ENCODE measurements at regions of chr16 and their contacts with region 1.

Region 1: GRCh38 chr16:77971306-77972271 is 50.8 kb upstream of the CLEC3A start:
- DNase-seq: peak; percentile 71 to 85 (median 81)
- ATAC-seq: peak in 3 of 4 donors; percentile 87 to 93 (median 88)
- H3K4me3 ChIP-seq: no peak overlapping the region
- H3K27ac ChIP-seq: peak overlapping the region in 1 of 12 donors; percentile 29
- H3K4me1 ChIP-seq: peaks cover 0 to 4% (median 0%) of the 10 kb centered on the region in 12 donors
- H3K27me3 ChIP-seq: peaks cover 0 to 5% (median 0%) of the 10 kb centered on the region in 9 donors
- CTCF ChIP-seq: peak; percentile 58 to 83 (median 78)
- POLR2A ChIP-seq: no peak

Region 2: DNA sequence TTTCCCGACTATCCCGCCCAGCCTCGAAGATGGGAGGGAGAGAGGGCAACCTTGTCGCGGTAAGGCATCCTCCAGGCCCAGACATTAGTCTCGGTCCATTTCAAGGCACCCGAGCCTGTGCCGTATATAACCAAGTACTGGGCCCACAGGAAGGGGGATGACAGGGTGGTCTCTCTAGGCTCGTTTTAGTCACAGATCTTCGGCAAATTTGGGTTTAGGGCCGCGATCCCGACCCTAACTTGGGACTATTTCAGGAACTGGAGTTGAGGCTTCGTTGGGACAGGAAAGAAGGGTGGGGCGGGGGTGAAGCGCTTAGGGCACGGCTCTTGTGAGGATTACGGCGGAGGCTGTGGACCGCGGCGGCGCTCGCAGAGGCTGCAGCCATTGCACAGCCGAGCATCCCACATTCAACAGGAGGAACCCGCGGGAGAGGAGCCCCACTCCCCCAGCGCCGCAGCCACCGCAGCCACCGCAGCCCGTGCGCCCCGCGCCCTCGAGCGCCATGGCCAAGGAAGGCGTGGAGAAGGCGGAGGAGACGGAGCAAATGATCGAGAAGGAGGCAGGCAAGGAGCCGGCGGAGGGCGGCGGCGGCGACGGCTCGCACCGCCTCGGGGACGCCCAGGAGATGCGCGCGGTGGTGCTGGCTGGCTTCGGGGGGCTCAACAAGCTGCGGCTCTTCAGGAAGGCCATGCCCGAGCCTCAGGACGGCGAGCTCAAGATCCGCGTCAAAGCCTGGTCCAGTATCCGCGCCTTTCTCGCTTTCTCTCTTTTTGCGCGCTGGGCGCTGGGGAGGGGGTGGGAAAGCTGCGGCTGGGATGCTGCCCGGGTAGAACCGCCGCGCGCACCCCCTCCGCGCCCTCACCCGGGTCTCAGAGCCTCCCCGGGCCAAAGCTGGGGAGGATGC is 183.2 kb before region 1 on chr16 and contains the start of gene VAT1L:
- intact Hi-C with region 1: loop called in 3 of 10 experiments (anchors 5 to 10 kb)
- DNase-seq: peak in 3 of 5 donors; percentile 32 to 34 (median 33)
- ATAC-seq: peak; percentile 52 to 94 (median 88)
- H3K4me3 ChIP-seq: peak within 1 kb of the TSS; percentile 47 to 78 (median 62)
- H3K27ac ChIP-seq: peak within 1 kb of the TSS in 2 of 12 donors; percentile 9 to 22
- H3K4me1 ChIP-seq: peaks cover 0 to 25% (median 7%) of the 10 kb centered on the region in 12 donors
- H3K27me3 ChIP-seq: peaks cover 6 to 66% (median 13%) of the 10 kb centered on the region in 9 donors
- CTCF ChIP-seq: no peak
- POLR2A ChIP-seq: no peak
- total RNA-seq, gene VAT1L: 2.9 to 57.5 (median 14.3) TPM

Region 3: DNA sequence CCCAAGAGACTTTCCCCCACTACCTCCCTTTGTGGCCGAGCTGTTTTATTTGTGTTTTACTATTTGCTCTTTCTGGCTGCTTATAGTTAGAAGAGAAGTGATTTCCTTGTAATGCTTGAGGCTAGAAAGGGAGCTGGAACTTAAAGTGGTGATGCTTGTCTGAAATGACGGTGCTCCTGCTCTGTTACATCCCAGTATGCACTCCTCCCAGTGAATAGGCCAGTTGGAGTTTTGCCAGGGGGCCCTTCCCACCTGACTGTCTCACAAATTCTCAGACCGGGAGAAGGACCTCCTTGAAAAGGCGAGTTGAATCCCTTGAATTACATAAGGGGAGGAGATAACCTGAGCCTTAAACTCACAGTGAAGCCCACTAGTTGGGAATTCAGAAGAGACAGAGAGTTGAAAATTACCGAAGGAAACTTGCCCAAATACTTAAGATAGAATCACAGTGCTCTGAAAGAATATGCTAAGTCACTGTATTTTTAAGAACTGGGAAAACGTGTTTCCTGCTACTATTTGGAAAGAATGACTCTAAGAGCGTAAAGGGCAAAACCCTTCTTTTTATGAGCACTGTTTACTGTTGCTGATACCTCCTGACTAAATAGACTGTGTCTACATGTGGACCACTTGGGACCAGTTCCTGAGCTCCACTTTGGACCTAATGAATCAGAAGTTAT is 34.0 kb before region 1 on chr16:
- intact Hi-C with region 1: no loop called
- DNase-seq: no peak
- ATAC-seq: peak in 1 of 4 donors; percentile 20
- H3K4me3 ChIP-seq: no peak overlapping the region
- H3K27ac ChIP-seq: no peak overlapping the region
- H3K4me1 ChIP-seq: peaks cover 0 to 9% (median 0%) of the 10 kb centered on the region in 12 donors
- H3K27me3 ChIP-seq: no peaks in the 10 kb centered on the region
- CTCF ChIP-seq: no peak
- POLR2A ChIP-seq: no peak